Heart right ventricle (tissue), 16 donors: ENCODE measurements at regions of chr18 and their contacts with region 1.

Region 1: GRCh38 chr18:44246001-44246400 is 434.7 kb upstream of the SETBP1 start:
- DNase-seq: no peak
- ATAC-seq: no peak
- H3K4me3 ChIP-seq: no peak overlapping the region
- H3K27ac ChIP-seq: no peak overlapping the region
- H3K4me1 ChIP-seq: no peaks in the 10 kb centered on the region
- H3K27me3 ChIP-seq: no peaks in the 10 kb centered on the region
- CTCF ChIP-seq: no peak

Region 2: DNA sequence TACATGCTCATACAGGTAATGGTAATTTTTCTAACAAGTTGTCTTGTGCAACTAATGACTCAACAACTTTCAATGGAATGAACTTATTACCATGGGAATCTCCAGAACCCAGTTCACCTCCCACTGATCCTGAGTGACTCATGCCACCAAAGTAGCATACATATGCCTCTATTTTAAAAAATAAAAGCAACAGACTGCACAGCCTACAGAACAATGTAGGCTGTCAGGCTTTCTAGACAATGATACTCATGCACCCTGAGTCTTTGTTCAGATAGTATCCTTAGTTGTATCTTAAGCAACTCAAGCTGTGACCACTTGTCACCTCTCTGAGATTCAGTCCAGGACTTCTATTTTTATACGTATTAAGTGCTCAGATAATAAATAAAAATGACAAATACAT is 96.3 kb before region 1 on chr18:
- intact Hi-C with region 1: loop called in 1 of 10 experiments (anchors 10 kb)
- DNase-seq: no peak
- ATAC-seq: peak in 2 of 8 donors; percentile 30 to 69
- H3K4me3 ChIP-seq: no peak overlapping the region
- H3K27ac ChIP-seq: no peak overlapping the region
- H3K4me1 ChIP-seq: peaks cover 0 to 9% (median 0%) of the 10 kb centered on the region in 9 donors
- H3K27me3 ChIP-seq: no peaks in the 10 kb centered on the region
- CTCF ChIP-seq: no peak

Region 3: DNA sequence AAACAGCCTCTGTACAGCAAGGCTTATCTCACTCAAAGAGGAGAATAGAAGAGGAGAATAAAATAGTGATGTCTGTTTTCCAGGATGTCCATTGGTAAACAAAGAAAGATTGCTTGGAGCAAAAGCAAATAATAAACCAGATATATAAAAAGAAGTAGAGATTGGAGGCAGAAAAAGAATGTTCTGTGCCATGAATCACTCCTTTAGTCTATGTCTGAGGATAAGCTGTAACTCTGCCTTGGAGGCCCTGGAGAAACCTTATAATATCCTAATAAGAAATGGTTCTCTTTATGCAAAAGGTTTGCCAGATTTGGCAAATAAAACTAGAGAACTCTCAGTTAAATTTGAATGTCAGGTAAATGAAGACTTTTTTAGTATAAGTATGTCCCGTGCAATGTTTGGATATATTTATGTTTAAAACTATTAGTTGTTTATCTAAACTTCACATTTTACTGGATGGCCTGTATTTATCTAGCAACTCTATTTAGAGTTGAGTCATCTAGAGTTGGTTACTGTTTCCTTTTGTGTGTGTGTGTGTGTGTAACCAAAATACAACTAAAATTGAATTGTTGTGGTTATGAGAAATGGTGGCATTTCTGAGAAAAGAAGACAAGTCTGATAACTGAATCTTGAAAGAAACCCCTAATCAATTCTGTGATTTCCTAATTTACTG is 75.7 kb before region 1 on chr18:
- intact Hi-C with region 1: no loop called
- DNase-seq: no peak
- ATAC-seq: no peak
- H3K4me3 ChIP-seq: no peak overlapping the region
- H3K27ac ChIP-seq: no peak overlapping the region
- H3K4me1 ChIP-seq: no peaks in the 10 kb centered on the region
- H3K27me3 ChIP-seq: no peaks in the 10 kb centered on the region
- CTCF ChIP-seq: no peak